ENCODE measurements at regions of chrX and their contacts with region 1.

Region 1: DNA sequence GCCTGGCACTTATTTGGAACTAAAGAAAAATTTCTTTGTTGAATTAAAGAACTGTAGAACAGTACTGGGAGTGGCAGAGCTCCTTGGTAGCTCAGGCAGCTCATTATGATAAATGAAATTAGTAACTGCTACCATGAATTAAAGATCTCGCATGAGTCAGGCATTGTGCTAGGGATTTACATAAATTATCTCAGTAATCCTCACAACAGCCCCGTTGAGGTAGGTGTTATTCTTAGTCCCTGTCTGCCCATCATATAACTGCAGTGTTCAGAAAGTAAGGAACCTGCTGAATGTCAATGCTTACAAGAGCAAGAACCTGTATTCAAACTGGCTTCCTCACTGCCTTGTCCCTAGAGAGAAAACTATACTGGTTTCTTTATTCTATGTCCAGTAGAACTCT is 108.3 kb downstream of the NLGN4X start:
- DNase-seq: no peak
- ATAC-seq: no peak

Region 2: DNA sequence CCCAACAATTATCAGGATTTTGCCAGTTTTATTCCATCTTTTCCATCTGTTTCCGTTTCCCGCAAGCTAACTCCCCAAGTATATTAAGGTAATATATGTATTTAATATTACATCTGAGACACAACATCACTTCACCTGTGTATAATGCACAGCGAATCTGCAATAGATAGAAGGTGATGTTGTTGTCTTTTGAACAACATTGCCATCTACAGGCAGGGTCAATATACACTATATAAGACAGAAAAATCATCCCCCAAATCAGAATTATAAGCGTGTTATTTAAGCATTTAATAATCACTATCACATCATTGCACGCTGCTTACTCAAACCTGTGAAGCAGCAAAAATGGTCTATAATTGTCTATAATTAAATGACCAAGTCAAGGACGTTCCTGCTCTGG is 1007.2 kb before region 1 on chrX:
- intact Hi-C with region 1: no loop called
- DNase-seq: no peak
- ATAC-seq: no peak

Region 3: GRCh38 chrX:8075636-8076035 is 1955.3 kb after region 1 on chrX:
- intact Hi-C with region 1: loop called (anchors 5 kb)
- DNase-seq: no peak
- ATAC-seq: no peak

Measured in sciatic nerve (tissue), 2 donors.